ENCODE measurements at regions of chr1 and their contacts with region 1.

Region 1: GRCh38 chr1:38046884-38047602 is 450 bp upstream of the POU3F1 start:
- DNase-seq: peak; percentile 42 to 72
- H3K4me3 ChIP-seq: peak overlapping the region; percentile 68
- H3K27ac ChIP-seq: no peak overlapping the region
- H3K4me1 ChIP-seq: no peaks in the 10 kb centered on the region
- H3K27me3 ChIP-seq: peaks cover 9% of the 10 kb centered on the region; the same call in 1 of the 2 replicates
- CTCF ChIP-seq: no peak

Region 2: GRCh38 chr1:38138498-38139233 is 91.6 kb after region 1 on chr1:
- CTCF ChIA-PET with region 1: no interaction called
- POLR2A ChIA-PET with region 1: no interaction called
- intact Hi-C with region 1: loop called (anchors 2 kb)
- DNase-seq: peak; percentile 99
- H3K4me3 ChIP-seq: no peak overlapping the region; the same call in 1 of the 2 replicates
- H3K27ac ChIP-seq: peak overlapping the region; percentile 48
- H3K4me1 ChIP-seq: peaks cover 58% of the 10 kb centered on the region
- H3K27me3 ChIP-seq: no peaks in the 10 kb centered on the region
- CTCF ChIP-seq: no peak

Region 3: GRCh38 chr1:38152351-38153065 is 105.5 kb after region 1 on chr1:
- CTCF ChIA-PET with region 1: no interaction called
- POLR2A ChIA-PET with region 1: no interaction called
- intact Hi-C with region 1: loop called (anchors 5 kb)
- DNase-seq: no peak
- H3K4me3 ChIP-seq: no peak overlapping the region
- H3K27ac ChIP-seq: no peak overlapping the region
- H3K4me1 ChIP-seq: no peaks in the 10 kb centered on the region
- H3K27me3 ChIP-seq: peaks cover 47% of the 10 kb centered on the region
- CTCF ChIP-seq: peak; percentile 58; the same call in 1 of the 2 replicates

Region 4: DNA sequence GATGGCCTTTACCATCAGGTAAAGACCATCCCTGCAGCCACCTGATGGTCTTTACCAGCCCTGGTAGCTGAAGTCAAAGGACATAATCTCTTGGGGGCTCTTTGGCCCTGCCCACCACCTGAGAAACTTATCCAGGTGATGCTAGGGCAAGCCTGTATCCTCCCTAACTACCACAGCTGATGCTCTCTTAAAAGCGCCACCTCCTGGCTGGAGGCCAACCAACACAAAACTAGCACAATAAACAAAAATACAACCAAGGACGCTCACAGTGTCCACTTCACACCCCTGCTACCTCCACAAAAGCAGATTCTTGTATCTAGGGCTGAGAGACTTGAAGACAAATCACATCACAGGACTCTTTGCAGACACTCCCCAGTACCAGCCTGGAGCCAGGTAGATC is 356.6 kb after region 1 on chr1:
- CTCF ChIA-PET with region 1: no interaction called
- POLR2A ChIA-PET with region 1: no interaction called
- intact Hi-C with region 1: loop called (anchors 10 kb)
- DNase-seq: no peak
- H3K4me3 ChIP-seq: no peak overlapping the region
- H3K27ac ChIP-seq: no peak overlapping the region
- H3K4me1 ChIP-seq: no peaks in the 10 kb centered on the region
- H3K27me3 ChIP-seq: no peaks in the 10 kb centered on the region
- CTCF ChIP-seq: no peak

Measured in PC-9 (cell line).